K562 (cell line): ENCODE measurements at regions of chr2 and their contacts with region 1.

Region 1: DNA sequence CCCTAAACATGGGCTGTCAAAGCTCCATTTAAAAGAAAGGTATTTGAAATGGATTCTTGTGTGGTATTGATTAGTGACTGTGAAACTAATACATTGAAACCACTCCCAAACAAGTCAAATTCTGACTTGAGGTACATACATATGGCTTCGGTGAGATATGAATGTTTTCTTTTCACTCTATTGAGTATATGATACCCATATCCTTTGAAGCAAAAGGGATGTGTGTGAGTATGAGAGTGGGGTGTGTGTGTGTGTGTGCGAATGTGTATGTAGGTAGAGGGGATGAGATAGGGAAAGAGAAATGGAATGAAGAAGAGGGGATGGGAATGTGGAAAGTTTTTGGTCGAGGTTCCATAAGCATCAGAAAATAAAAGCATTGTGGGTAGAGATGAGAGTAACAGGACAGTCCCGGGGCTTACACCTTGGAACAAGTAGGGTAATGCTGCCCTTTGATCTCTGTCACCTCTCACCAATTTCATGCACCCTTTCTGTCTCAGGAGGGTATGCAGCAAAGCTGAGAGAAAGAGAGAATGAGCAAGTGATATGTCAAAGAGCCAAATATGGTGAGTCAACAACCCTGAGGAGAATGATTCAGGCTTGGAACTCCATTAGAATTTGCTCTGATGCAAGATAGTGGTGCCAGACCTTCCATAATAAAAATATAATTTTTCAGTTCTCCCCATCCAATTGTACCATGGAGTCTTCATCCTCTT is 64.0 kb upstream of the ZEB2 start:
- DNase-seq: peak in 1 of 4 experiments; percentile 37
- ATAC-seq: no peak
- H3K4me3 ChIP-seq: 0 out of 2 replicates have a peak overlapping the region, but pooled peaks have one; percentile 21
- H3K27ac ChIP-seq: peak overlapping the region; percentile 100
- H3K4me1 ChIP-seq: peaks cover 4 to 53% of the 10 kb centered on the region in 2 experiments
- H3K27me3 ChIP-seq: no peaks in the 10 kb centered on the region
- CTCF ChIP-seq: no peak
- EP300 ChIP-seq: no peak
- POLR2A ChIP-seq: peak; percentile 20; the same call in 1 of the 2 replicates
- RAD21 ChIP-seq: no peak

Region 2: DNA sequence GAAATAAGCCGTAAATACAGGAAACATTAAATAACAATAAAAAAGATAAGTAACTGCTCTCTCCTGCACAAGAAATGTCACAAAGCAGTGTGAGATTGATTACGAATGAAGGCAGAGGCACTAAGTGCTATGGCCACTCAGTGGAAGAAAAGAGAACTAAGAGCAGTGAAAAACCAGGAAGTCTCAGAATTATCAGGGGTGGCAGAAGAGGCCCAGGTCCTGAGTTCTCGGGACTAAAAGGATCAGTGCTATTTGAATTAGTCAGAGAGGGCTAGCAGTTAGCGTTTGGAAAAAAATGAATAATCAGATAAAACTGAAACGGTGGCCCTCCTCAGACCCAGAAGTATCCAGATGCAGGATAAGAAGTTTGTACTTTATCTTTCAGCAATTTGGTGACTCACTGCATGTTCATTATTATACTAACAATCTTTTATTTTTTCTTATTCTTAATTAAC is 431.1 kb before region 1 on chr2:
- CTCF ChIA-PET with region 1: no interaction called
- POLR2A ChIA-PET with region 1: no interaction called
- in situ Hi-C with region 1: no loop called
- intact Hi-C with region 1: loop called (anchors 2 kb)
- DNase-seq: peak in 3 of 4 experiments; percentile 10 to 84 (median 71)
- ATAC-seq: peak; percentile 91
- H3K4me3 ChIP-seq: no peak overlapping the region
- H3K27ac ChIP-seq: peak overlapping the region; percentile 65; the same call in 2 of the 3 replicates
- H3K4me1 ChIP-seq: peaks cover 0 to 26% of the 10 kb centered on the region in 2 experiments; a peak in 4 of 5 replicates
- H3K27me3 ChIP-seq: no peaks in the 10 kb centered on the region
- CTCF ChIP-seq: peak; percentile 30 to 44 (median 34); a peak in 3 of 6 replicates
- EP300 ChIP-seq: peak; percentile 83
- POLR2A ChIP-seq: no peak
- RAD21 ChIP-seq: peak; percentile 54 to 57

Region 3: DNA sequence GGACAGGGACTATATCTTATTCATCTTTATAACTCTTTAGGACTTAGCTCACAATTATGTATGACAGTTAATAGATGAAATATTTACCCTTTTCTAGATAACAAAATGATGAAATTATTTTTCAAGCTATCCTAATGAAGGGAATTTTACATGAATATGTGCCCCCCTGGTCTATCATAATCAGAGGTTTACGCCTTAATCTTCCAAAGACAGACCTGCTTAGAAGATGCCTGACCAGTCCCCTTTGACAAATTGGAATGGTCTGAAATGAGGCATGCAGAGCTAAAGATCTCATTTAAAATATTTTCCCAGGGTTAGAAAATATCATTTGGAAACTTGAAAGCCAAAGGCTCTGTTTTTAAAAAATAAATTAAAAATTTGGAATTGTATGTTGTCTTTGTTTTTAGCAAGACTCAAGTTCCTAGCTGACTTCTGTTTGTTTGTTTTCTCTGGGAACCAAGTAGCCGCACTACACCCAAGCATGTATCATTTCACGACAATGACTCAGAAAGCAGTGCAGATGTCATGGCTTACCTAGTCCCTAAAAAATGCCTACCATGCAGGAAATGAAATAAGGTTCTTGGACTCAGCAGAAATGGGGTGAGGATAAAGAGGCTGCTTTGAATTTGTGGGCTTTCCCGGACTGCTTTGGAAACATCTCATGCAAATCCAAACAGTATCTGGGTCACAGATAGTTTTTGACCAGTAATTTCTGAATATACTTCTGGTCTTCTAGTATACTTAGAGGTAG is 226.1 kb before region 1 on chr2:
- CTCF ChIA-PET with region 1: no interaction called
- POLR2A ChIA-PET with region 1: no interaction called
- in situ Hi-C with region 1: no loop called
- intact Hi-C with region 1: loop called (anchors 5 kb)
- DNase-seq: peak; percentile 32 to 75 (median 48)
- ATAC-seq: peak; percentile 76
- H3K4me3 ChIP-seq: no peak overlapping the region
- H3K27ac ChIP-seq: peak overlapping the region; percentile 45
- H3K4me1 ChIP-seq: peaks cover 3 to 33% of the 10 kb centered on the region in 2 experiments; a peak in 4 of 5 replicates
- H3K27me3 ChIP-seq: no peaks in the 10 kb centered on the region
- CTCF ChIP-seq: no peak
- EP300 ChIP-seq: no peak
- POLR2A ChIP-seq: no peak
- RAD21 ChIP-seq: no peak

Region 4: DNA sequence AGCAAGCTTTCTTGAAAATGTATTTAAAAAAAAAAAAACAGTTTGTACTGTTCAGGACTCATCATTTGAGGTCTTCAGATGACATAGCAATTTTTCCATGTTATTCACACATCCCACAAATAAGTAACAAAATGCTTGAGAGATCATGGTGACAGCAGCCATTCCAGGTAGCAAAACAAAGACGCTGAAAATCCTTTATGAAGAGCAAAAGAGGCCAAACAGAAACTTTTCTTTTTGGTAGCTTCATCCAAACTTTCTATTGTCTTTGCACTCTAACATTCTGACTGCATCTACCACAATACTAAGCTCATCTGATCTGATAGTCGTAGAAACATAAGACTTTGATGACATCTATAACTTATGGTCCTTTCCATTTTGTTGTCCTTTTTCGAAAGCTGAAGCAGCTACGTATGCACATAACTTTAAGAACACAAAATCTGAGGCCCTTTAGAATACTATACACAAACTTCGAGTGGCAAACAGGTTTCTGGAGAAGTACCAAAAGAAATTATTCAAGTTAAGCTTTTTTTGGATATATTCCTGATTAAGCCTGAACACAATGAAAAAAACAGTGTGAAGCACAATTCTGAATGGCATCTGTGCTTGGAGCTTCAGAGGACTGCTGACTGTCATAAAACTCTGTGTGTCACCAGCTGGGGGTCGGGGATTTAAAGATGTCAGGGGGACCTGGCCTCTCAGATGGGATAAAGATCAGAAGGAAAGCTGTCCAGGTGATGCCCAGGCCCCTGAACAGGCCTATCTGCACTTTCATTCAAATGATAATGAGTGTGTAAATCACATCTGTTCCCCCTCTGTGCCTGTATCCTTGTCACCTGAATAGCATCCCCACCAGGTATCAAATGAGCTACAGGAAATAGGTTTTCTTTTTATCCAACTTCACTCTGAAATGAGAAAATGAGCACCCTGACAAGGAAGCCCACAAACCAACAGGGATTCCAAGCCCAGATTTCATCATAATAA is 139.8 kb before region 1 on chr2:
- CTCF ChIA-PET with region 1: no interaction called
- POLR2A ChIA-PET with region 1: no interaction called
- in situ Hi-C with region 1: no loop called
- intact Hi-C with region 1: loop called (anchors 2 kb)
- DNase-seq: no peak
- ATAC-seq: peak; percentile 3; the same call in 1 of the 3 replicates
- H3K4me3 ChIP-seq: no peak overlapping the region
- H3K27ac ChIP-seq: peak overlapping the region; percentile 37; the same call in 1 of the 3 replicates
- H3K4me1 ChIP-seq: peaks cover 15 to 34% of the 10 kb centered on the region in 2 experiments
- H3K27me3 ChIP-seq: no peaks in the 10 kb centered on the region
- CTCF ChIP-seq: no peak
- EP300 ChIP-seq: no peak
- POLR2A ChIP-seq: no peak
- RAD21 ChIP-seq: no peak

Region 5: DNA sequence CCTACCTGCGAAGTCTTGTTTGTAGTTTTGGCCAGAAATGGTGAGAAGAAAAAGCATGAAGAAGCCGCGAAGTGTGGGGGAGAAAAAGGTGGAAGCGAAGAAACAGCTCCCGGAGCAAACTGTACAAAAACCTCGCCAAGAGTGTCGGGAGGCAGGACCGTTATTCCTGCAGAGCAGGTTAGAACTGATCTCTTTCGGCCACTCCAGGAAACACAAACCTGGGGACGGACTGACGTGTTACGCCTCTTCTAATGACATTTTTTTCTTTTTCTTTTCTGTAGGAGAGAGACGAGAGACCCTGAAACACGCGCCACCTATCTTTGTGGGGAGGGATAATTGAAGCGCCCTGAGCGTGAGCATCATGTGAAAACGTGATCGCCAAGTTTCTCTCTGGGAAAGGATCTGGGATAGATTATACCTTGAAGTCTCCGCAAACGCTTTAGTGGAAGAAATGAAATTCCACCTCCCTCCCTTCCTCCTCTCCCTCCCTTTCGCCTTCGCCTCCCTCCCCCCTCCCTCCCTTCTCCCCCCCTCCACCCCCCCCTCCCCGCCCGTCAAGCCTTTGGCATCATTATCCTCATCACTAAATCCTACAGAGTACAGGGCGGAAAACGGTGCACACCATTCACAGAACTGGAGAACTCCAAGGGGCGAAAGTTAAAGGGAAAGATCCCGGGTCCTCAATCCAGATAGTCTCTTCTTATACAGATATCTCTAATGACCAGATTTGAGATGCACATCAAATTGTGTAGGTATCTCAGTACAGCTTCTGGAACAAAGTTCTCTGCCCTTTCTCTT is 63.8 kb before region 1 on chr2 and contains the start of gene ZEB2:
- CTCF ChIA-PET with region 1: interaction called, 3 read pairs
- POLR2A ChIA-PET with region 1: interaction called, 8 read pairs
- in situ Hi-C with region 1: loop called (anchors 5 kb)
- intact Hi-C with region 1: loop called (anchors 1 kb)
- DNase-seq: peak; percentile 50 to 93 (median 68)
- ATAC-seq: peak; percentile 58
- H3K4me3 ChIP-seq: peak within 1 kb of the TSS; percentile 91
- H3K27ac ChIP-seq: peak within 1 kb of the TSS; percentile 95
- H3K4me1 ChIP-seq: peaks cover 13 to 19% of the 10 kb centered on the region in 2 experiments
- H3K27me3 ChIP-seq: no peaks in the 10 kb centered on the region
- CTCF ChIP-seq: peak; percentile 61 to 81 (median 79)
- EP300 ChIP-seq: peak; percentile 55
- POLR2A ChIP-seq: peak; percentile 98
- RAD21 ChIP-seq: peak; percentile 56 to 61
- polyA plus RNA-seq, gene ZEB2: 15.1 to 30.1 TPM

Region 6: GRCh38 chr2:144596073-144596871 is 12.4 kb after region 1 on chr2:
- CTCF ChIA-PET with region 1: no interaction called
- POLR2A ChIA-PET with region 1: interaction called, 25 read pairs
- in situ Hi-C with region 1: no loop called
- intact Hi-C with region 1: loop called (anchors 1 kb)
- DNase-seq: peak in 2 of 4 experiments; percentile 70 to 84
- ATAC-seq: peak; percentile 88
- H3K4me3 ChIP-seq: peak overlapping the region; percentile 1; the same call in 1 of the 2 replicates
- H3K27ac ChIP-seq: peak overlapping the region; percentile 83
- H3K4me1 ChIP-seq: peaks cover 7 to 25% of the 10 kb centered on the region in 2 experiments; a peak in 4 of 5 replicates
- H3K27me3 ChIP-seq: no peaks in the 10 kb centered on the region
- CTCF ChIP-seq: no peak
- EP300 ChIP-seq: peak; percentile 92
- POLR2A ChIP-seq: no peak
- RAD21 ChIP-seq: peak in 1 of 2 experiments; percentile 23; a peak in 2 of 4 replicates

Region 7: GRCh38 chr2:144703852-144704708 is 120.2 kb after region 1 on chr2:
- CTCF ChIA-PET with region 1: no interaction called
- POLR2A ChIA-PET with region 1: no interaction called
- in situ Hi-C with region 1: no loop called
- intact Hi-C with region 1: loop called (anchors 1 kb)
- DNase-seq: peak; percentile 14 to 79 (median 38)
- ATAC-seq: peak; percentile 87
- H3K4me3 ChIP-seq: no peak overlapping the region
- H3K27ac ChIP-seq: peak overlapping the region; percentile 51
- H3K4me1 ChIP-seq: peaks cover 0 to 25% of the 10 kb centered on the region in 2 experiments; a peak in 3 of 5 replicates
- H3K27me3 ChIP-seq: no peaks in the 10 kb centered on the region
- CTCF ChIP-seq: 0 out of 6 replicates have a peak, but pooled peaks of 1 of the 3 experiments have one; percentile 2
- EP300 ChIP-seq: peak; percentile 69
- POLR2A ChIP-seq: no peak
- RAD21 ChIP-seq: peak in 1 of 2 experiments; percentile 51; a peak in 3 of 4 replicates